ENCODE measurements at regions of chr6 and their contacts with region 1.

Region 1: GRCh38 chr6:52162940-52163908 is 23.0 kb upstream of the IL17A start:
- DNase-seq: no peak
- ATAC-seq: peak; percentile 92
- H3K4me3 ChIP-seq: no peak overlapping the region
- H3K27ac ChIP-seq: no peak overlapping the region
- H3K4me1 ChIP-seq: peaks cover 9% of the 10 kb centered on the region; the same call in 1 of the 2 replicates
- H3K27me3 ChIP-seq: no peaks in the 10 kb centered on the region
- CTCF ChIP-seq: peak; percentile 84 to 95 (median 91)
- EP300 ChIP-seq: no peak
- POLR2A ChIP-seq: no peak
- RAD21 ChIP-seq: peak; percentile 100

Region 2: DNA sequence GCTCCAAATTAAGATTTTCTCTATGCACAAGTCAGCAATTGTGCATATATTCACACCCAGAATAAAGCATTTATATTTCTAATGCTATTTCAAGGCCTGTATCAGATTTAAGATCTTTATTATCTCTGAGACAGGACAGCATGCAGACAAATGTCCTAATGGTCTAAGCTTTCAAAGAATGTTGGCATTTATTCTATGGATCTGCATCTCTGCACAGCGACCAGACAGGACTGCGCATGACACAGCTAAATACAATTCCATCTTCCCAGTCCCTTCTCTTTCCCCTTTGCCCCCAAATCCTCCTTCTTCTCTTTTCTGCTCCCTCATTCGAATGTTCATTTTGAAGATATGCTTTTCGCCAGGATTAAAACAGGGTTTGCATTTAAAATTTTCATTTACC is 554.3 kb before region 1 on chr6:
- CTCF ChIA-PET with region 1: no interaction called
- POLR2A ChIA-PET with region 1: no interaction called
- RAD21 ChIA-PET with region 1: no interaction called
- SMC1A ChIA-PET with region 1: no interaction called
- in situ Hi-C with region 1: no loop called
- intact Hi-C with region 1: no loop called
- DNase-seq: no peak
- ATAC-seq: no peak
- H3K4me3 ChIP-seq: no peak overlapping the region
- H3K27ac ChIP-seq: no peak overlapping the region
- H3K4me1 ChIP-seq: no peaks in the 10 kb centered on the region
- H3K27me3 ChIP-seq: no peaks in the 10 kb centered on the region
- CTCF ChIP-seq: no peak
- EP300 ChIP-seq: no peak
- POLR2A ChIP-seq: no peak
- RAD21 ChIP-seq: no peak

Region 3: GRCh38 chr6:51934098-51934497 is 229.1 kb before region 1 on chr6:
- CTCF ChIA-PET with region 1: no interaction called
- POLR2A ChIA-PET with region 1: no interaction called
- RAD21 ChIA-PET with region 1: no interaction called
- SMC1A ChIA-PET with region 1: no interaction called
- in situ Hi-C with region 1: no loop called
- intact Hi-C with region 1: no loop called
- DNase-seq: no peak
- ATAC-seq: peak; percentile 81
- H3K4me3 ChIP-seq: no peak overlapping the region
- H3K27ac ChIP-seq: no peak overlapping the region
- H3K4me1 ChIP-seq: peaks cover 6% of the 10 kb centered on the region
- H3K27me3 ChIP-seq: no peaks in the 10 kb centered on the region
- CTCF ChIP-seq: peak; percentile 21 to 64 (median 58); a peak in 5 of 6 replicates
- EP300 ChIP-seq: no peak
- POLR2A ChIP-seq: no peak
- RAD21 ChIP-seq: peak; percentile 49

Region 4: DNA sequence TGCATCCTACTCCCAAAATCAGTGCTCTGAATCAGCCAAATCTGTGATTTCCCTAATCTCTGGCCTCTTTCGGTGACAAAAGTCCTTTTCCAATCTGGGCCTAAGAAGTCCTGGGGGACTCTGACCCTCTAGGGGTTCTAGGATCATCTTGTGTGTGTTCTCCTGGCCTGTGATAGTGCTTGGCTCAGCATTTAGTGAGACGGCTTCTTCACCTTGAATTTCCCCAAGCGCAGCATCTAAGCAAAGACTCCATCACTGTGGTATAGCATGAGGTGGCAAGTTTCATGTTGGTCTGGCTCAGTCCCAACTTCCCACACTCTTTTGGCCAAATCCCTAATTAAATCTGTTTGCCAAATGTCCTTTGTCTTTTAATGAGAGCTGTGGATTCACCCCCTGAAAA is 10.9 kb after region 1 on chr6:
- CTCF ChIA-PET with region 1: interaction called, 15 read pairs
- POLR2A ChIA-PET with region 1: no interaction called
- RAD21 ChIA-PET with region 1: no interaction called
- SMC1A ChIA-PET with region 1: interaction called, 9 read pairs
- in situ Hi-C with region 1: no loop called
- intact Hi-C with region 1: no loop called
- DNase-seq: no peak
- ATAC-seq: no peak
- H3K4me3 ChIP-seq: no peak overlapping the region
- H3K27ac ChIP-seq: no peak overlapping the region
- H3K4me1 ChIP-seq: peaks cover 6% of the 10 kb centered on the region
- H3K27me3 ChIP-seq: no peaks in the 10 kb centered on the region
- CTCF ChIP-seq: no peak
- EP300 ChIP-seq: no peak
- POLR2A ChIP-seq: no peak
- RAD21 ChIP-seq: no peak

Region 5: GRCh38 chr6:52227495-52227894 is 64.3 kb after region 1 on chr6:
- CTCF ChIA-PET with region 1: interaction called, 91 read pairs
- POLR2A ChIA-PET with region 1: no interaction called
- RAD21 ChIA-PET with region 1: interaction called, 28 read pairs
- SMC1A ChIA-PET with region 1: interaction called, 45 read pairs
- in situ Hi-C with region 1: loop called (anchors 5 kb)
- intact Hi-C with region 1: loop called (anchors 2 kb)
- DNase-seq: peak; percentile 94
- ATAC-seq: peak; percentile 98
- H3K4me3 ChIP-seq: no peak overlapping the region
- H3K27ac ChIP-seq: no peak overlapping the region
- H3K4me1 ChIP-seq: peaks cover 33% of the 10 kb centered on the region
- H3K27me3 ChIP-seq: no peaks in the 10 kb centered on the region; a peak in 1 of 4 replicates
- CTCF ChIP-seq: no peak
- EP300 ChIP-seq: peak; percentile 72 to 93; a peak in 3 of 4 replicates
- POLR2A ChIP-seq: no peak
- RAD21 ChIP-seq: no peak

Measured in GM12878 (cell line).